Posterior cingulate gyrus (tissue), 11 donors: ENCODE measurements at regions of chr20 and their contacts with region 1.

Region 1: DNA sequence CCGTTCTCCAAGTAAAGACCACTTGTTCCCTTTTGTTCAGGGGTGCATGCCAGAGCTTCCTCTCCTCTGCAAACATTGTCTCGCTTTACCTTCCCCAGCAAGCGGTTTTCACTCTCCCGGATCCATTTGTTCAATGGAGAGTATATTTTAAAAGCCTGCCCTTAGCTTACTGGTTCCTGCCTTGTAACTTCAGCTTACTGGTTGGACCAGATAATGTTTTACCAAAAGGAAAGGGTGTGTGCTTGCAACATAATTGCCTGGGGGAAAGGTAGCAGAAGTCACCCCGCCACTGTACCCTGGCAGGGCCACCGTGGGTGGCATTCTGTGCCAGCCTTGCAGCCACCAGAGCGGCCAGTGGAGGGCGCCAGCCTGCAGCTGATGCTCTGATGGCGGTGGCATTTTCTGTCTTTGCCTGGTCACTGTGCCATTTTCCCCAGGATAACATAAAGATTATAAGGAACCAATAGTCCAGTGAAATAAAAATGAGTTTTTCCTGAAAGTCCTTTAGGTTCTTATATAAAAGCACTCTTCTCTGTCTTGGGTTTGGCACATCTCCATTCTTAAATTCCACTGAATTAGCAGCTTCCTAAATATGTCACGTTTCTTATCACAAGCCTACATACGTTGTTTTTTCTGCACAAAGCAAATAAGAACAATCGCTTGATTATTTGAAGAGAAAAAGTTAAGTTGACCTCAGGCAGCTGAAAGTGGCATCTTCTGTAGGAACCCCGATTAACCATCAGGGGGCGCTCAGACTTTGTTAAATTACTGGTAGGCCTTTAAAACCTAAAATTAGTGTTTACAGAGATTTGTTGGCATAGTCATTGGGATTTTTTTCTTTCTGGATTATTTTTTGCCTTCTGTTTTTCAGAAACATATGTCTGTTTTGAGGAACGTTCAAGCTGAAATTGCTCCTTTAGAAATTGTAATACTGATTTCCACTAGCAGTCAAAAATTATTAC is 67.4 kb upstream of the XRN2 start:
- DNase-seq: peak; percentile 58 to 97 (median 82)

Region 2: DNA sequence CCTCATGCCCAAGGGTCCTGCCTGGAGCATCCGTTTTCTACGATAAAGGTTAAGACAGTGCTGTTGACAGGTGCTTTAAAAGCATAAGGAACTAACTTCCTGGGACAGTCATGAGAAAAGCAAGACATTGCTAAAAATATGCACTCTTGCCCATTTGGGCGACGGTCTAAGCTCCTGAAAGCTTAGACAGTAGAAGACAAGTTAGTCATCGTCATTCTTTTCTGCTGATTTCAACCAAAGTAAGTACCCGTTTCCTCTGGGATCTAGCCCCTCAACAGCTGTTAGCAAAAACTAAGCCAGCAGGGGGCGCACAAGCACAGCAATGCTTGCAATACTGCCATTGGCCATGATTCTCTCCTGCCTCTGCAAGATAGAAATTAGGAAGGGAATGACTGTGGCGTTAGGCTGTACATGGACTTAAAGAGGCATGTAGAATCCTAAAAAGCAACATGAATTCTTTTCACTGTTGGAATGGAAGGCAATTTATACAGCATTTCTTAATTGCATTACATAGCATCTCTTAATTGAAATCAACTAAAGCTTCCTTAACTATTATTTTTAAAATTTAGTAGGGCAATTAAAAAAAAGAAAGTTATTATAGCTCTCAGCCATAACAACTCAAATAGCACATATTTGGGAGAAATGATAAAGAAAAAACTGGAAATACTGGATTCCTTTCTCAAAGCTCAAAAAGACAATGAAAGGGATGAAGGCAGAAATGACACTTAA is 375.5 kb before region 1 on chr20:
- intact Hi-C with region 1: loop called (anchors 5 kb)
- DNase-seq: peak; percentile 75 to 99 (median 95)

Region 3: DNA sequence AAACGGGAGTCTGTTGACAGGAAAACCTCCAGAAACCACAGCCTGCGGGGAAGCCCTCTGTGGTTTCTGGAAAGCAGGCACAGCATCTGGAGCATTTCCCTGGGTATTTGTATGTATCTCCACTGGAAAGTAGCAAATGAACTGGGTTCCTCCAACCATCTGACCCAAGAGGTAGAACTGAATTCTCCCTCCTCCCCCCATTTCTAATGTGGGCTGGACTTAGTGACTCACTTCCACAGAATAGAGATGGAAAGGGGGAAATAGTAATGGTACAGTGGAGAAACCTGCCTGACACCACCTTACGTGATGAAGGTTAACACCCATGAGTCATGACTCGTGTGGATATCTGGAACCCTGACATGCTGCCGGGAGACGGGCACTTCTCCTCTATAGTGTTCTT is 15.5 kb after region 1 on chr20:
- intact Hi-C with region 1: no loop called
- DNase-seq: no peak

Region 4: DNA sequence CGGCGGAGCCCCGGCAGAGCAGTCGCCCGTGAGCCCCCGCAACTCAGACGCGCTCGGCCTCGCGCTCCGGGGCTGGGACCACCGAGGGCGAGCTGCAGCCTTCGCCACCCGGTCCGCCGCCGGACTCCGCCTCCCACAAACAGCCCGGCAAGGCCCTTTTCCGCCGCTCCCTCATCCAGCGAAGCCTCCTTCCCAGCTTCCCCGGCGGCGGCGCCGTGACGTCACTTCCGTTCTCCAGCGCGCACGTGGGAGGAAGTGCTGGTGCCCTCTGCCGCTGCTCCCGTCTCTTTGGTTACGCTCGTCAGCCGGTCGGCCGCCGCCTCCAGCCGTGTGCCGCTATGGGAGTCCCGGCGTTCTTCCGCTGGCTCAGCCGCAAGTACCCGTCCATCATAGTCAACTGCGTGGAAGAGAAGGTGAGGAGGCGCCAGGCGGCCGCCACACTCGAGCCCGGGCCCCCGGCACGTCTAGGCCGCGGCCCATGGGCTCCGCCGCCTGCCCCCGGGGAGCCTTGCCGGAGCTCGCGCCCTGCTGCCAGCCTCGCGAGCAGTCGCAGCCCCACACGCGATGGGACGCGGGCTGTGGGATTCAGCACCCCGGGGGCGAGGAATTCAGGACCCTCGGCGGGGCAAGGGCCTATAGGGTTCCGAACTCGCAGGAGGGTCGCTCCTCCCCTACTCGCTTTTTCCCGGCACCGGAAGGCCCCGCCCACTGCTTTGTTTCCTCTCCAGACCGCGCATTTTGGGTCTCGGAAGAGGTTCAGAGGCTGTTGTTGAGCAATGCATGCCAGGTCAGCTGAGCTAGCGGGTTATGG is 67.5 kb after region 1 on chr20 and contains the start of gene XRN2:
- intact Hi-C with region 1: loop called (anchors 5 kb)
- DNase-seq: peak; percentile 92 to 99 (median 96)

Region 5: DNA sequence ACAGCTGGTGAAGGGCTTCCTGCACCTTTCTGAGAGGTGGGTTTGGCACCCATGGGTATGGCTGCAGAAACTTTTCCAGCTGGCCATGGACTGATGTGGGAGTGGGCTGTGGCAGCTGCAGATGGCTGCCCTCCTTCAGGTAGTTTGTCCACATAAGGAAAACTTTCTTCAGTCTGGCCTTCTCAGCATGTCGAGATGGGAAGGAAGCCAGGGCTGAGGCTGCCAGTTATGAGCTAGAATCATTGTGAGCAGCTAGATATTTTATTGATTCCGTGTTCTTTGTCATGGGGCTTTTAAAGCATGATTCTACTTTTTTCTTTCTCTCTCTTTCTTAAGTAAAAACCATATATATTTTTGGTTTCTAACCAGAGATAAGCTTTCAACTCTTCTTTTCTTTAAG is 144.9 kb after region 1 on chr20:
- intact Hi-C with region 1: no loop called
- DNase-seq: peak in 1 of 10 donors; percentile 45

Region 6: GRCh38 chr20:21465799-21466198 is 230.0 kb after region 1 on chr20:
- intact Hi-C with region 1: no loop called
- DNase-seq: no peak

Region 7: GRCh38 chr20:21520702-21521595 is 285.2 kb after region 1 on chr20:
- intact Hi-C with region 1: loop called (anchors 5 kb)
- DNase-seq: peak in 6 of 10 donors; percentile 46 to 94 (median 82)

Region 8: DNA sequence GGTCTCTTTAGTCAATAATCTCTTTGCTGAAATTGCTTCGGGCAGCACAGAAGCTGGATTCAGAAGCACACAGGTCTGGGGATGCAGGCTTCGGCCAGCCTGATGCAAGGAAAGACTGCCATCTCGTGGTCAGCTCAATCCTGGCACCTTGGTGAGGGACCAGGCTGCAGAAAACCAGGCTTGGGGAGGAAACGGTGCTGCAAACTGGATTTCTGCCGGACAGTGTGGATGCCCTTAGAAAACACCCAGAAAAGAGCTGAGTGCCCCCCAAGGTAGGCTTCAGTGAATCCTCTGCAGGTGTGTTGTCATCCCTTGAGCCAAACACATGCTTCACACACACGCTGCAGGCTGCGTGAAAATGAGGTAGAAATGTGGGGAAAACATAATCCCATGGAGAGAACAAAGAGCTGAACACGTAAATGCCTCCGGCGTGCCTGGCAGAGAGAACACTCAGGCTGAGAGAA is 379.9 kb after region 1 on chr20:
- intact Hi-C with region 1: loop called (anchors 2 kb)
- DNase-seq: peak; percentile 77 to 98 (median 87)